Left cardiac atrium (tissue), 4 donors: ENCODE measurements at regions of chr10 and their contacts with region 1.

Region 1: GRCh38 chr10:44386546-44387052 is 1.7 kb upstream of the CXCL12 start:
- DNase-seq: peak; percentile 69
- ATAC-seq: peak; percentile 80 to 81

Region 2: DNA sequence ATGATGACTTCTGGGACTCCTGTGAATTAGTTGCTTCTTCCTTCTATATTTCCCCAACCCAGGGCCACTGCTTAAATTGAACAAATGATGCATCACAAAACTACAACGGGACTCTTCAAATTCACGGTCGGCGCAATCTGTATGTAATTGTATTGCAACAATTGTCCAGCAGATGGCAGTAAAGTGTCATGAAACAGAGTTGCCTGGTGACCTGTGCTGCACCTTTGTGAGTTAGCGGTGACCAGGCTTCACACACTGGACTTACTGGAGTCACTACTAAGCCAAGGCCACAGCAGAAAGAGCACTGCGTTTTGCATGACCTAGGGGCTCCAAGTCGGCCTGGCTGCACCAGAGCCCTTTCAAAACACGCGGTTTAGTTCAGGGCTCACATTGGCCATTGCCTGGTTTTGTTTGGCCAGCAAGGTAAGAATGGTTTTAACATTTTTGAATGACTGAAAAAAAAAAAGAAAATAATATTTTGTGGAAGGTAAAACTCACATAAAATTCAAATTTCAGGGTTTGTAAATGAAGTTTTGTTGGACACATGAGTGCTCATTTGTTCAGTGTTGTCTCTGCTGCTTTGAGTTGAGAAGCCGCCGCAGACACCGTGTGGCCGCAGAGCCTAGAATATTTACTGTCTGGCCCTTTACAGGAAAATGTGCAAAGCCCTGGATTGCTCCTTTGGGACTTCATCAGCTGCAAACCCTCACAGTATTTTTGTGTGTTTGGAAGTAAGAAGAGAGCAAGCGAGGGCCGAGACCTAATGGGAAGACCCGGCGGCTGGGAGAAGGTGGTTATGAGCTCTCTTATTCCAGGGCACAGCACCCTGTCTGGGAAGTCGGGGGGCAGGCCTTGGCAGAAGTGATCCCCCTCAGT is 714.7 kb before region 1 on chr10:
- intact Hi-C with region 1: loop called (anchors 5 kb)
- DNase-seq: no peak
- ATAC-seq: peak; percentile 70 to 74

Region 3: GRCh38 chr10:44310762-44311562 is 75.6 kb before region 1 on chr10:
- intact Hi-C with region 1: loop called in 1 of 2 experiments (anchors 5 kb)
- DNase-seq: peak; percentile 90
- ATAC-seq: peak; percentile 99

Region 4: DNA sequence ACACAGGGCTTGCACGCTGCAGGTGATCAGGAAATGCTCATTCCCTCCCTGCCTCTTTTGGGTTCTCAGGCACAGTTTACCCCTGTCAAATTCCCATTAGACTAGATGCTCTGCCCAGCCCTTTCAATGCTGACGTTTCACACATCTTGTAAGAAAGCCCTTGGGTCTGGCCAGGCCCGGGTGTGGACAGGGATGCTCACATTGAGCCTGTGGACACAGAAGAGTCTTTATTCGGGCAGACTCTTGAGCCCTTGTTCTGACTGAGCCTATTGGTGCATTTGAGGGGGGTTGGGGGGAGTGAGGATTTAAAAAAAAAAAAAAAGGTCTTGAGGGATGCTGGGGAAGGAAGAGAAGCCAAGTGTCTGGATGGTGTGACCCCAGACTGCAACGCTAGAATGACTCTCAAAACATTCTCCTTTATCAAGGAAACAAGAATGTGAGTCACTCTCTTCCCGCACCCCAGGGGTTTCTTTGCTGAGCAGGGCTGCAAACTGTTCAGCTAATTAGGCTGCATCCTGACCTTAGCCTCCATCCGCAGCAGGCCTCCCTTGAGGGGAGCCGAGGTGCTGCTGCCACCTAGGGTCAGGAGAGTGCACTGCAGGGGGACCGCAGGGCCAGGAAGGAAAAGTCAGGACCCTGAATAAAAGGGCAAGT is 470.9 kb after region 1 on chr10:
- intact Hi-C with region 1: loop called (anchors 5 kb)
- DNase-seq: peak; percentile 70
- ATAC-seq: peak; percentile 83 to 88